H1 (cell line): ENCODE measurements at regions of chr10 and their contacts with region 1.

Region 1: DNA sequence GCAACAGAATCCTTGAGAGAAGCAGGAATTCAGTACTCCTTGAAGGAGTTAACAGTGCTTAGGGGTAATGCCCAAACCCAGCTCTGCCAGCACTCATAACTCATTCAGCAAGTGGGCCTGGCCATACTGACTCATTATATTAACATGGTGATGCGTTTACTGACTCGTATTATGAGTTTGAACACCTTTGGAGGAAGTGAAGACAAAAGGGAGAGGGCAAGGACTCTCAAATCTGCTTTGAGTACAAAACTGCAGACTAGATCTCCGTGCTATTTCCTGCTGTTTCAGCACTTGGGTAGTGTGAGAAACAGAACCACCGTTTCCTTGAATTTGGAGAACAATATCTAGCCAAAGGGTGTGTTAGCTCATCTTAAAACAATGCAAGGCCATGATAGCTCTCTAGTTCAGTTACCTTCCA is 30.8 kb downstream of the SLC16A9 start:
- DNase-seq: no peak
- H3K4me3 ChIP-seq: no peak overlapping the region
- H3K27ac ChIP-seq: no peak overlapping the region
- H3K4me1 ChIP-seq: peaks cover 0 to 2% (median 0%) of the 10 kb centered on the region in 4 experiments; a peak in 2 of 7 replicates
- H3K27me3 ChIP-seq: no peaks in the 10 kb centered on the region
- CTCF ChIP-seq: no peak
- EP300 ChIP-seq: no peak
- POLR2A ChIP-seq: no peak
- RAD21 ChIP-seq: no peak

Region 2: DNA sequence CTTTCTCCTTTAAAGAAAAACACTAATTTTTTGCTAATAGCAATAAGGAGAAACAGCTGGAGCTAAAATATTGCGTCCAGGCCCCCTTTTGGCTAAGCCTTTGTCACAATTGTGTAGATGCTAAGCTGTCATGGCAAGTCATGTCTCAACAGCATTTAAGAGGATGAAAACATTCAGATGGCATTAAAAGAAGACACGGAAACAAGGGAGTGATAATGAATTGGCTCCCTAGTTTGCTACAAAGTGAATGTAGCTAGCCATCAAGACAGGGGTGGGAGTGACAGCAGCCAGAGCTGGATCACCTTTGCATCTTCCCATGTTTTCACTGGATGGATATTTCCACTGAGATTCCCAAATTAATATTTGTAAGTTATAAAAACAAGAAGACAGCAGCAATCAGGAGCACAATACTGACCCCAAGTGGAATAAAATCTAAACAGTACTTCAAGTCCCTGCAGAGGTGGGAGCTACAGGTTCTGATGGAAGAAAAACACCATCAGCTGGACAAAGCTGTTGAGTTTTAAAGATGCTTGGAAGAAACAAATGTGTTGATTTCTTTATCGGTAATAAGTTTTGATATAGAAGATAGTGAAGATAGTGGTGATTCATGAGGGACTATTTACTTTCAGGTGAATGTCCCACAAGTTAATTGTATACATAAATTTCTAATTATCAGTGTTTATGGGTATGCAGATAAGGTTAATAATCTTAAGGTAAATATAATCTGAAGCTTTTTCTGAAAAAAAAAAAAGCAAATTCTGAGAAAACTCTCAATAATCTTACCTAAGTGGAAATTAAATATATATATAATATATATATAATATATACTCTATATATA is 98.6 kb before region 1 on chr10:
- CTCF ChIA-PET with region 1: no interaction called
- POLR2A ChIA-PET with region 1: no interaction called
- DNase-seq: no peak
- H3K4me3 ChIP-seq: no peak overlapping the region
- H3K27ac ChIP-seq: no peak overlapping the region
- H3K4me1 ChIP-seq: no peaks in the 10 kb centered on the region
- H3K27me3 ChIP-seq: no peaks in the 10 kb centered on the region
- CTCF ChIP-seq: peak in 2 of 3 experiments; percentile 33 to 44; a peak in 2 of 4 replicates
- EP300 ChIP-seq: no peak
- POLR2A ChIP-seq: no peak
- RAD21 ChIP-seq: peak; percentile 79 to 80

Region 3: DNA sequence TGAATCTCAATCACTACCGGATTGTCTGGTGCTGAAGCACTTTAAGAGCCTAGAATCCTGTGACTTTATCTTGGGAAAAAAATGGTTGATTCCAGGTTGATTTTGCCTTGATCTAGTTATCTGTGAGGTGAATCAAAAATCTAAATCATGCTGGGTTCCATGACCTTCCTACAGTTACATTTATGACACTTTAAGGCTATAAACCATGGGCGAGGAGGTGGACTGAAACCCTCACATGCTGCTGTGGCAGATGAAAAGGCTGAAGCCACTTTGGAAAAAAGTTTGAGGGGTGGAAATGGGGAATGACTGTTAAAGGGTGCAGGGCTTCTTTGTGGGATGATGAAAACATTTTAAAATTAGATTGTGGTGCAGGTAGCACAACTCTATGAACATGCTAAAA is 13.2 kb after region 1 on chr10:
- CTCF ChIA-PET with region 1: interaction called, 11 read pairs
- POLR2A ChIA-PET with region 1: no interaction called
- DNase-seq: no peak
- H3K4me3 ChIP-seq: no peak overlapping the region
- H3K27ac ChIP-seq: no peak overlapping the region
- H3K4me1 ChIP-seq: peaks cover 0 to 2% (median 0%) of the 10 kb centered on the region in 4 experiments; a peak in 1 of 7 replicates
- H3K27me3 ChIP-seq: no peaks in the 10 kb centered on the region
- CTCF ChIP-seq: no peak
- EP300 ChIP-seq: no peak
- POLR2A ChIP-seq: no peak
- RAD21 ChIP-seq: no peak

Region 4: DNA sequence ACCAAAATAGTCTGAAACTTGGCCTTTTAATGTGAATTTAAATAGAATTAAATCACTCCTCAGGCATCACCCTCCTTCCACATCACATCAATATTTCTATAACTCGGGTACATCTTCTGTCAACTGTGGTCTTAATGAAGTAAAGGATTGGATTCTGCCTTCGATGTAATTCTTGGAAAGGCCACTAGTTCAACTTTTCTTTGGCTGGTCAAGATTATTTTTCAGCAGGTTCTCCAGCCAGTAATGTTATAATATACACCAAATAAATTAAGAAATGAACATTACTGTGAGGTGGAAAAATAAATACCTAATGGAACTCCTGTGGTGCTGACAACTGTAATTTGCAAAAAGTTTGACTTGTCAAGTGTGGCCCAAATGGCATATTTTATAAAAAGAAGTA is 40.5 kb after region 1 on chr10:
- CTCF ChIA-PET with region 1: no interaction called
- POLR2A ChIA-PET with region 1: no interaction called
- DNase-seq: no peak
- H3K4me3 ChIP-seq: no peak overlapping the region
- H3K27ac ChIP-seq: no peak overlapping the region
- H3K4me1 ChIP-seq: no peaks in the 10 kb centered on the region
- H3K27me3 ChIP-seq: peaks cover 0 to 1% (median 0%) of the 10 kb centered on the region in 4 experiments; a peak in 1 of 7 replicates
- CTCF ChIP-seq: peak in 1 of 3 experiments; percentile 35; a peak in 1 of 4 replicates
- EP300 ChIP-seq: no peak
- POLR2A ChIP-seq: no peak
- RAD21 ChIP-seq: no peak

Region 5: GRCh38 chr10:59793919-59794318 is 115.0 kb after region 1 on chr10:
- CTCF ChIA-PET with region 1: no interaction called
- POLR2A ChIA-PET with region 1: no interaction called
- DNase-seq: no peak
- H3K4me3 ChIP-seq: no peak overlapping the region
- H3K27ac ChIP-seq: no peak overlapping the region
- H3K4me1 ChIP-seq: no peaks in the 10 kb centered on the region
- H3K27me3 ChIP-seq: no peaks in the 10 kb centered on the region
- CTCF ChIP-seq: no peak
- EP300 ChIP-seq: no peak
- POLR2A ChIP-seq: no peak
- RAD21 ChIP-seq: no peak